SK-N-SH (cell line): ENCODE measurements at regions of chr19 and their contacts with region 1.

Region 1: GRCh38 chr19:19865739-19866481 is at the start of gene ZNF253:
- DNase-seq: peak; percentile 92
- H3K4me3 ChIP-seq: peak within 1 kb of the TSS; percentile 78 to 97
- H3K27ac ChIP-seq: peak within 1 kb of the TSS; percentile 80 to 97
- H3K4me1 ChIP-seq: no peaks in the 10 kb centered on the region
- H3K27me3 ChIP-seq: no peaks in the 10 kb centered on the region
- CTCF ChIP-seq: no peak
- EP300 ChIP-seq: no peak
- RAD21 ChIP-seq: no peak
- polyA plus RNA-seq, gene ZNF253: 0.79 and 0.81 TPM in 2 replicates

Region 2: GRCh38 chr19:19776041-19777008 is 89.6 kb before region 1 on chr19:
- CTCF ChIA-PET with region 1: interaction called, 3 read pairs
- POLR2A ChIA-PET with region 1: interaction called, 12 read pairs
- DNase-seq: peak; percentile 90
- H3K4me3 ChIP-seq: peak overlapping the region; percentile 79 to 83
- H3K27ac ChIP-seq: peak overlapping the region; percentile 38 to 82
- H3K4me1 ChIP-seq: peaks cover 0 to 12% of the 10 kb centered on the region in 2 experiments; a peak in 2 of 4 replicates
- H3K27me3 ChIP-seq: no peaks in the 10 kb centered on the region
- CTCF ChIP-seq: no peak
- EP300 ChIP-seq: no peak
- RAD21 ChIP-seq: 0 out of 2 replicates have a peak, but pooled peaks have one; percentile 10

Region 3: DNA sequence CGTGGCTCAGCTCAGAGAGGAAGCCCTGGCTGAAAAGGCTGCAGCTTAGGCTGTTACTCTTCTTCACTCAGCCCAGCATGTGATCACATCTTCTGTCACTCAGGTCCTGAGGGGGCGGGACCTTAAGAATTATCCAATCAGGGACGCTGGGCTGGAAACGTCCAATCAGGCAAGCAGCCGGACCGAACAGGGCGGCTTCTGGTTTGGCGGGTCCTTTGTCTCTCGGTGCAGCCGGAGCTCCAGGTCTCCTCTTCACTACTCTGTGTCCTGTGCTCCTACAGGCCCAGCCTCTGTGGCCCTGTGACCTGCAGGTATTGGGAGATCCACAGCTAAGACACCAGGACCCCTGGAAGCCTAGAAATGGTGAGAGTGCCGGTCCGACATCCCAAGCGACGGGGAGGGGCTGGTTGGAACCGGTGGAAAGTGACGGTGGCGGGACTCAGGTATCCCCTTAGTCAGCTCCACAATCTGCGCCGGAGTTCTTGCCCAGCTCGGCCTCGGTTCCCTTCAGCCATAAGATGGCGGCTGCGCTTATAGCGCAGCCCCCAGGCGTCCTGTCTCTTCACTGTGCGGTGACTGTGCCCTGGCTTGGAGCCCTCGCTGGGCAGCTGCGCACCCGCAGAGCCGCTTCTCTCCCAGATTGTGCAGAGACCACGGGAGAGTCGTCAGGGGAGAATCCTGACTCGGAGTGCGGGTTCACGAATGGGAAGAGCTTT is 35.0 kb after region 1 on chr19 and contains the start of gene ZNF93:
- CTCF ChIA-PET with region 1: interaction called, 4 read pairs
- POLR2A ChIA-PET with region 1: interaction called, 29 read pairs
- DNase-seq: peak; percentile 84
- H3K4me3 ChIP-seq: peak within 1 kb of the TSS; percentile 61 to 90
- H3K27ac ChIP-seq: peak within 1 kb of the TSS; percentile 80 to 86
- H3K4me1 ChIP-seq: no peaks in the 10 kb centered on the region; a peak in 1 of 4 replicates
- H3K27me3 ChIP-seq: no peaks in the 10 kb centered on the region
- CTCF ChIP-seq: no peak
- EP300 ChIP-seq: no peak
- RAD21 ChIP-seq: no peak
- polyA plus RNA-seq, gene ZNF93: 4.3 and 6.7 TPM in 2 replicates